ENCODE measurements at regions of chr19 and their contacts with region 1.

Region 1: DNA sequence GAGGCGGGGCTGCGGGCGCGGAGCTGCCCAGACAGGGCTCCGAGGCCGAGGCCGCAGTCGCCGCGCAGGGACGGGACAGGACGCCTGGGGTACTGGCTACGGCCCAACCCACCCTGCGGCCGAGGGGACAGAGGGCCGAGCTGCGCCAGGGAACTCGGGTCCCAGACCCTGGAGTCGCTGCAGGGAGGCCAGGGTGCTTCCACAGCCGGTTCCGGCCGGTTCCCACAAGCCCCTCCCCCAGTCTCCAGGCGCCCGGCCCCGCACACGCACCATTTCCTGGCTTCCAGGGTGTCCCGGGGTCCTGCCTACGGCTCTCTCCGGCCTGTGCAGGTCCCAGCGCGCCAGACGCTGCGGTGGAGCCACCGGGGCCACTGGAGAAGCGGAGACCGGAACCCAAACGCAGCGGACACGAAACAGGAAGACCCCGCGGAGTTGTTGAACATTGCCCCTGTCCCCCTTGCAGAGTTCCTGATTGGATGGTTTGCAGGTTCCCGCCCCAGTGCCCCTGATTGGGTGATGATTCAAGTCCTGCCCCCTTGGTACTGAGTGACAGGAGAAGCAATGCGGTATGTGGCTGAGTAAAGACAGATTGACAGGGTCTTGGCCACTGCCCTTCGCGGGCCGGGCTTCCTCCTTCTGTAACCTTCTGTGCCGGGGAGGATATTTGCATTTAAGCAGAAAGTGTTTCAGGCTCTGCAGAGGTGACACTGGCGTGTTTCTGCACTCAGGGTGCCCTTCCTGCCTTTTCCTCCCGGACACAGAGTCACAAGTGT is at the start of gene ZNF564:
- DNase-seq: peak; percentile 97 to 98
- H3K4me3 ChIP-seq: peak within 1 kb of the TSS; percentile 71 to 90
- H3K27ac ChIP-seq: peak within 1 kb of the TSS; percentile 94 to 97
- H3K4me1 ChIP-seq: peaks cover 0 to 47% (median 23%) of the 10 kb centered on the region in 4 donors
- H3K27me3 ChIP-seq: peaks cover 0 to 2% of the 10 kb centered on the region in 2 donors
- CTCF ChIP-seq: no peak

Region 2: GRCh38 chr19:12495002-12495802 is 56.0 kb before region 1 on chr19:
- intact Hi-C with region 1: loop called (anchors 5 kb)
- DNase-seq: peak; percentile 96 to 97
- H3K4me3 ChIP-seq: peak overlapping the region; percentile 58 to 66
- H3K27ac ChIP-seq: peak overlapping the region; percentile 89 to 90
- H3K4me1 ChIP-seq: peaks cover 0 to 13% (median 3%) of the 10 kb centered on the region in 4 donors
- H3K27me3 ChIP-seq: no peaks in the 10 kb centered on the region
- CTCF ChIP-seq: peak in 1 of 2 experiments; percentile 38

Region 3: DNA sequence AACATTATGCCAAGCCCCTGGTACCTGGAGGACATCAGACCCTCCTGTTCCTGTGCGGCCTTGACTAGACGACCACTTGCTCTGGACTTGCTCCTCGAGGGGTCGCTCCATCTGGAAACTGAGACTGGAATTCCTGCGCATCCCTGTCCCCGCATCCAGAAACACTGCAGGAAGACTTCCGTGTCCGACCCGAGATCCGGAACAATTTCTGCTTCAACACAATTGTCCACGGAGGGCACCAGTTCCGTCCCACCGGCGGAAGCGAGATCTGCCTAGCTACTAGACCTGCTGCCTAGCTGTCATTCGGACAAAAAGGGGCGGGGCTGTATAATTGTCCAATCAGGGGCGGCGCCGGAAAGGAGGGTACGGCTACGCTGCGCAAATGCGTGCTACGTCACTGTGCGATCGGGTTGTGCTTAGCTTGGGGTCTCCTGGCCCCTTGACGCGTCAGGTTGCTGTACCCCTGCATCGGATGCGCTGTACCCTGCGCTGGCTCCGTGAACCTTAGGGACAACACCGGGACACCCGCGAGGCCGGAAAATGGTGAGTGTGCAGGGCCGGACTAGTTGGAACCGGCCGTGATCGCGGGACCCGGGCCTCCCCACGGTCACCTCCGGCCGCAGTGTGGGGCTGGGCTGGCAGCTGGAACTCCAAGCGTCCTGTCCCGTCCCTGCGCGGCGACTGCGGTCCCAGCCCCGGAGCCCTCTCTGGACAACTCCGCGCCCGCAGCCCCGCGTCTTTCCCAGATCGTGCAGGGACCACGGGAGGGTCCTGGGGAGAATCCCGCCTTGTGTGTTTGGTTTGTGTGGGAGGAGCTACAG is 59.5 kb after region 1 on chr19 and contains the starts of genes ZNF490 and ZNF791:
- intact Hi-C with region 1: loop called (anchors 2 kb)
- DNase-seq: peak; percentile 99 to 100
- H3K4me3 ChIP-seq: peak within 1 kb of the TSS; percentile 99 to 100
- H3K27ac ChIP-seq: peak within 1 kb of the TSS; percentile 100
- H3K4me1 ChIP-seq: peaks cover 0 to 53% (median 24%) of the 10 kb centered on the region in 4 donors
- H3K27me3 ChIP-seq: no peaks in the 10 kb centered on the region
- CTCF ChIP-seq: no peak

Region 4: GRCh38 chr19:12806239-12807081 is 255.2 kb after region 1 on chr19 and contains the start of gene RNASEH2A:
- intact Hi-C with region 1: no loop called
- DNase-seq: peak; percentile 84 to 95
- H3K4me3 ChIP-seq: peak within 1 kb of the TSS; percentile 53 to 54
- H3K27ac ChIP-seq: peak within 1 kb of the TSS; percentile 41 to 67
- H3K4me1 ChIP-seq: peaks cover 5 to 20% (median 18%) of the 10 kb centered on the region in 4 donors
- H3K27me3 ChIP-seq: no peaks in the 10 kb centered on the region
- CTCF ChIP-seq: peak in 1 of 2 experiments; percentile 13

Measured in tibial artery (tissue), 4 donors.